Motor neuron (in vitro differentiated cells): ENCODE measurements at regions of chr7 and their contacts with region 1.

Region 1: DNA sequence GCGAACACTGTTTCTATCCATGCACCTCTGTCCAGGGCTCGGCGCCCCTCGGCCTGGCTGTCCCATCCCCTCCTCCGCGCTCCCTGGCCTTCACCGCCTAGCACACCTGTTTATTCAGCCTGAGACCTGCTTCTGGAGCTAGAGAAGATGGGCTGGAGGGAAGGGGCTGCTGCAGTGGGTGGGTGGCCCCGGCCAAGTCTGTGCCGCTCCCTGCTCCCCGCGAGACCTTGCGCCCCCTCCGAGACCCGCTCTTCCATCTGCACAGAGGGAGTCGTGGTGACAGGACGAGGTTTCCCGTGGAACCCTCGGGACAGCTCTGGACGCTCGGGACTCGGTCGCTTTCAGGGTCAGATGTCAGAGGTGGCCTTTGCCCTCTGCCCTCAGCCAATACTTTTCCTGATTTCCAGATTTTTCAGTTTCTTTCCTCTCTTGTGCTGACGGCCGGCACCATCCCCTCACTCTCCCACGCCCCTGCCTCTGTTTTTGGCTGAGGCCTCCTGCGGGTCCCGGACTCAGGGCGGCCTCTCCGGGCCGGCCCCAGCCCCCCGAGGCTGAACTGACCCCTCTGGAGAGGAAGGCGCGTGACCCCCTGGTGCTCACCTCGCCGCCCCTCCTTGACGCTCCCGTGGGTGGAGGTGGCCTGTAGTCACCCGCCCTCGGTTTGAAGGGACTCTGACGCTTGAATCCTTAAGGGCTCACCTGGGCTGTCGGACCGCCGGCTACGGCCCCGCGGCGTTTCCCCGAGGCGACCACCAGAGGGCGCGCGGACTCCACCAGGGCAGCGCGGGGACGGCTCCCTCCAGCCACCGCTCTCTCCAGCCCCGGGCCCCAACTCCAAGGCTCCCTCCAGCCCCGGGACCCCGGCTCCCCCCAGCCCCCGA is 15.6 kb downstream of the SHH start:
- ATAC-seq: peak; percentile 75 to 92 (median 82)
- H3K4me3 ChIP-seq: no peak overlapping the region
- H3K27ac ChIP-seq: no peak overlapping the region
- H3K4me1 ChIP-seq: no peaks in the 10 kb centered on the region

Region 2: GRCh38 chr7:156014201-156014600 is 217.6 kb after region 1 on chr7:
- in situ Hi-C with region 1: no loop called
- ATAC-seq: no peak
- H3K4me3 ChIP-seq: no peak overlapping the region
- H3K27ac ChIP-seq: no peak overlapping the region
- H3K4me1 ChIP-seq: no peaks in the 10 kb centered on the region

Region 3: GRCh38 chr7:156816943-156817572 is 1020.4 kb after region 1 on chr7:
- in situ Hi-C with region 1: loop called in 5 of 9 experiments (anchors 10 to 25 kb)
- ATAC-seq: peak in 3 of 8 experiments; percentile 23 to 44 (median 39)
- H3K4me3 ChIP-seq: no peak overlapping the region
- H3K27ac ChIP-seq: no peak overlapping the region
- H3K4me1 ChIP-seq: no peaks in the 10 kb centered on the region